ENCODE measurements at regions of chr11 and their contacts with region 1.

Region 1: DNA sequence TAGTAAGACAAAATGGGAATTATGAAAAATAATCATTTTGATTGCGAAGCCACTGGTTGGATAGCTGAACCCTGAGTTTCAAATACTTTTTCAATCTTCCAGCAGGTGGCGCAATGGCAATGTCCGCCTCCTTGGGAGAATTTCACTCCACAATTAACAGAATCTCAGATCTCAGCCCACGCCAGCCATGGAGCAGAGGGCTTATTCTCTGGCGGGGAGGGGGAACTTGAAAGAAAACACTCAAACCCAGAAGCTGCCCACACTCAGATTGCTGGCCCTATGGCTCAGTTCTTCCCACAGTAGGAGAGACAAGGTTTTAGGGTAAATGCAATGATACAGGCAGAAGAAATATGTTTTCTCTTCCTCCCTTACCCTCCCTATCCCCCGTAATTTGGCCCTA is 38.7 kb upstream of the RCN1 start:
- DNase-seq: peak; percentile 45 to 86
- H3K4me3 ChIP-seq: no peak overlapping the region
- CTCF ChIP-seq: no peak
- POLR2A ChIP-seq: no peak

Region 2: GRCh38 chr11:32032478-32032877 is 19.7 kb before region 1 on chr11:
- intact Hi-C with region 1: loop called (anchors 1 kb)
- DNase-seq: no peak
- H3K4me3 ChIP-seq: no peak overlapping the region
- CTCF ChIP-seq: no peak
- POLR2A ChIP-seq: no peak

Region 3: DNA sequence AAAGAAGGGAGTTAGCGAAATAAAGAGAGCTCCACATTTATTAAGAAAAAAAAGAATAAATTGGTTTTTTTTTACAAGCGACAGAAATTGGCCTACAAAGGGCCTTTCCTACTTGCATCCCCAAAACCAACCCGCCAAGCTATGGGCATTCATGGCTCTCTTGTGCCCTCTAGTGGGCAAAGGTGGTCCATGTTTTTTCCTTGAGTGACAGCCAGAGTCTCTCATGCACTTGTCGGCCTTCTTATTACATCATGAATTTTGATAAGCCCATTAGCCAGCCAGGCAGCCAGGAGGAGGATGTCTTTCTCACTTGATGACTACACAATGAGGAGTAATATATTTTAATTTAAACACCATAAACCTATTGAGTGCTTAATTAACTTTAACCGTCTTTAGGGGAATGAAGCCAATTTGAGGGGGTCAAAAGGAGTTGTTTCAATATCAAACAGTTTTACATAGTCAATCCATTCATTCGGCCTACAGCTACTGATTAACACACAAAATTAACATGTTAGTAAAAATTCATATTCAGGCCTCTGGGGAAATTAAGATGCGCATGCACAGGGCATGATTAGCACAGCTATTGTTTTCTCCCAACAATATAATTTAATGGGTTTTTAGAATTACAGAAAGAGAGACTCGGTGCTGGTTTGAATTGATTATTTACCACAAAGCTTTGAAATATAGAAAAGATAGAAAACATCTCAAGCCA is 124.2 kb after region 1 on chr11:
- intact Hi-C with region 1: loop called (anchors 5 kb)
- DNase-seq: peak; percentile 85 to 94
- H3K4me3 ChIP-seq: no peak overlapping the region
- CTCF ChIP-seq: peak in 1 of 3 donors; percentile 23
- POLR2A ChIP-seq: no peak

Region 4: GRCh38 chr11:32297611-32298011 is 245.4 kb after region 1 on chr11:
- intact Hi-C with region 1: loop called (anchors 5 kb)
- DNase-seq: no peak
- H3K4me3 ChIP-seq: no peak overlapping the region
- CTCF ChIP-seq: no peak
- POLR2A ChIP-seq: no peak

Region 5: GRCh38 chr11:32881286-32881685 is 829.1 kb after region 1 on chr11:
- intact Hi-C with region 1: no loop called
- DNase-seq: no peak
- H3K4me3 ChIP-seq: no peak overlapping the region
- CTCF ChIP-seq: no peak
- POLR2A ChIP-seq: no peak